Endothelial cell of umbilical vein (primary cell): ENCODE measurements at regions of chr4 and their contacts with region 1.

Region 1: GRCh38 chr4:54233277-54233696 is 4.2 kb downstream of the PDGFRA start:
- DNase-seq: peak; percentile 77
- H3K4me3 ChIP-seq: peak overlapping the region in 2 of 3 experiments; percentile 43 to 62
- H3K27ac ChIP-seq: no peak overlapping the region
- H3K4me1 ChIP-seq: peaks cover 24% of the 10 kb centered on the region
- H3K27me3 ChIP-seq: peaks cover 49 to 53% of the 10 kb centered on the region in 2 experiments
- CTCF ChIP-seq: peak; percentile 81 to 95
- POLR2A ChIP-seq: no peak

Region 2: DNA sequence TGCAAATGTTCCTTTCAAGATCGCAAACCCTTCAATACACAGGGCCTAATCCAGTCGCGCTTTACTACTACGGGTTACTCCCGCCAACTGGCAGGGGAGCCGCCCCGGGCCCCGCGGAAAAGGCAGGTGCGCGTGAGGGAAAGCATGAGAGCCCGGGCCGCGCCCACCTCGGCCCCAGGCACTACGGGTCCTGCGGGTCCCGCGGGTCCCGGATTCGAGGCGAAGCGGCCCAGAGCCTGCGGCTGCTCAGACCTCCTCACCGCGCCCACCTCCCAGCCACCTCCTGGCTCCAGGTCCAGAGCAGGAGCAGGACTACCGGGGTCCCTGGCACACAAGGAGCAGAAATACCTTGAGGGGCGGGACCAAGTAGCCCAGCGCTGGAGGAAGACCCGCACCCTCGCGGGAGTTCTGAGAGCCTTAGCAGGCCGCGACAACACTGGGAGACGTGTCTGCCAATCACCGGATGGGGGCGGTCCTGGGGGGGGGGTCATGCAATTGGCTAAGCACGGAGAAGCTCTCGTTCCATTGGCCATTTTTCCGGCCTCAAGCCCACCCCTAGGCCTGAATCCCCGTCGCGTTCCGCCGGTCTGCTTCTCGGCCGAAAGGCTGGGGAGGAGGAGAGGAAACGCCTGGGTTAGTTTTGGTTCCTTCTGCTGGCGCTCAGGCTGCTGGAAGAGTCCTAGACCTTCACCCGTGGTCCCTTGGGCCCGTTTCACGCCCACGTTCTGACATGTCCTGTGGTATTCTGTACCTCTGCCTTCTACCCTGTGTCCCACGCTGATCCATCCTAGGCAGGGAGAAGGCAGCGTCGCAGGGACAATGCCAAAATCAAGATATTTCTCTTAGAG is 1511.1 kb before region 1 on chr4:
- CTCF ChIA-PET with region 1: interaction called, 10 read pairs
- POLR2A ChIA-PET with region 1: no interaction called
- dilution Hi-C with region 1: no loop called
- intact Hi-C with region 1: no loop called
- DNase-seq: peak; percentile 98
- H3K4me3 ChIP-seq: peak overlapping the region; percentile 34 to 69 (median 65)
- H3K27ac ChIP-seq: peak overlapping the region; percentile 44
- H3K4me1 ChIP-seq: peaks cover 4% of the 10 kb centered on the region
- H3K27me3 ChIP-seq: no peaks in the 10 kb centered on the region
- CTCF ChIP-seq: no peak
- POLR2A ChIP-seq: peak; percentile 98

Region 3: DNA sequence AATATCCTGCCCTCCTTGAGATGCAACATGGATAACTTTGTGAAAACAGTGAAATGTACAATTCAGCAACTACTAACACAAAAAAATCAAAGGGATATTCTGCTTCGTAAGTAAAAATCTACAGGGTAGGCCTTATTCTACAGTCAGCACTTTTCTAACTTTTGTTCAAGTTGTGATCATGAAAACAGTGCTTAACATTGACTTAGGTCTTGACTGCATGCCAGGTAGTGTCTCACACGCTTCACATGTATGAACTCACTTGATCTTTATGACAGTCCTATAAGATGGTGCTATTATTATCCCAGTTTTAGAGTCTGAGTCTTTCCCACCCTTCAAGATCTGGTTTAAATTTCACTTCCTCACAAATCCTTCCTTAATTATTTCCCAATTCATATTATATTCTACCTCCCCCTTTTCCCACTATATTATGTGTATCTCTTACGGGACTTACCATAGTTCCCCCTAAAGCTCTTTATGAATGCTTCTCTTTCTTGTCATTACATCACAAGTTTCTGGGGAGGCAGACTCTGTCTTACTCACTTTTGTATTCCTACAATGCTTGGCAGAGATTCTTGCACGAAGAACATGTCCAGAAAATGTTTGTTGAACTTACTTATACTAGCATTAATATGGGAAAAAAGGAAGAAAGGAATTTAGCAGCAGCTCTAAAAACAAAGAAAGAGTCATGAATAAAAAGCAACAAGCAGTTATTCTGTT is 1047.3 kb before region 1 on chr4:
- CTCF ChIA-PET with region 1: interaction called, 22 read pairs
- POLR2A ChIA-PET with region 1: no interaction called
- dilution Hi-C with region 1: no loop called
- intact Hi-C with region 1: no loop called
- DNase-seq: no peak
- H3K4me3 ChIP-seq: no peak overlapping the region
- H3K27ac ChIP-seq: no peak overlapping the region
- H3K4me1 ChIP-seq: no peaks in the 10 kb centered on the region
- H3K27me3 ChIP-seq: no peaks in the 10 kb centered on the region
- CTCF ChIP-seq: no peak
- POLR2A ChIP-seq: no peak

Region 4: DNA sequence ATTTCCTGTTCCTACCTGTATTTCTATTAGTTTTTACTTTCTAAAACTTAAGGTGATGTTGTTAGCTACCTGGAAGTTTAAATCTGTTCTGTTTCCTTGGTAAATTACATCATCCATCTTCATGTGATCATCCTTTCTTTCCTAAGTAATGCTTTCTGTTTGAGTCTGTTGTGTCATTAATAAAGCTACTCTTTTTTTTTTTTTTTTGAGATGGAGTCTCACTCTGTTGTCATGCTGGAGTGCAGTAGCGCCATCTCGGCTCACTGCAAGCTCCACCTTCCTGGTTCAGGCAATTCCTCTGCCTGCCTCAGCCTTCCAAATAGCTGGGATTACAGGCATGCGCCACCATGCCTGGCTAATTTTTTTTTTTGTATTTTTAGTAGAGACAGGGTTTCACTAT is 782.5 kb before region 1 on chr4:
- CTCF ChIA-PET with region 1: interaction called, 10 read pairs
- POLR2A ChIA-PET with region 1: no interaction called
- dilution Hi-C with region 1: no loop called
- intact Hi-C with region 1: no loop called
- DNase-seq: no peak
- H3K4me3 ChIP-seq: no peak overlapping the region
- H3K27ac ChIP-seq: no peak overlapping the region
- H3K4me1 ChIP-seq: no peaks in the 10 kb centered on the region
- H3K27me3 ChIP-seq: no peaks in the 10 kb centered on the region
- CTCF ChIP-seq: no peak
- POLR2A ChIP-seq: no peak

Region 5: GRCh38 chr4:53695540-53696463 is 537.5 kb before region 1 on chr4:
- CTCF ChIA-PET with region 1: interaction called, 14 read pairs
- POLR2A ChIA-PET with region 1: no interaction called
- dilution Hi-C with region 1: no loop called
- intact Hi-C with region 1: no loop called
- DNase-seq: no peak
- H3K4me3 ChIP-seq: no peak overlapping the region
- H3K27ac ChIP-seq: no peak overlapping the region
- H3K4me1 ChIP-seq: no peaks in the 10 kb centered on the region
- H3K27me3 ChIP-seq: peaks cover 0 to 6% of the 10 kb centered on the region in 2 experiments
- CTCF ChIP-seq: no peak
- POLR2A ChIP-seq: no peak

Region 6: DNA sequence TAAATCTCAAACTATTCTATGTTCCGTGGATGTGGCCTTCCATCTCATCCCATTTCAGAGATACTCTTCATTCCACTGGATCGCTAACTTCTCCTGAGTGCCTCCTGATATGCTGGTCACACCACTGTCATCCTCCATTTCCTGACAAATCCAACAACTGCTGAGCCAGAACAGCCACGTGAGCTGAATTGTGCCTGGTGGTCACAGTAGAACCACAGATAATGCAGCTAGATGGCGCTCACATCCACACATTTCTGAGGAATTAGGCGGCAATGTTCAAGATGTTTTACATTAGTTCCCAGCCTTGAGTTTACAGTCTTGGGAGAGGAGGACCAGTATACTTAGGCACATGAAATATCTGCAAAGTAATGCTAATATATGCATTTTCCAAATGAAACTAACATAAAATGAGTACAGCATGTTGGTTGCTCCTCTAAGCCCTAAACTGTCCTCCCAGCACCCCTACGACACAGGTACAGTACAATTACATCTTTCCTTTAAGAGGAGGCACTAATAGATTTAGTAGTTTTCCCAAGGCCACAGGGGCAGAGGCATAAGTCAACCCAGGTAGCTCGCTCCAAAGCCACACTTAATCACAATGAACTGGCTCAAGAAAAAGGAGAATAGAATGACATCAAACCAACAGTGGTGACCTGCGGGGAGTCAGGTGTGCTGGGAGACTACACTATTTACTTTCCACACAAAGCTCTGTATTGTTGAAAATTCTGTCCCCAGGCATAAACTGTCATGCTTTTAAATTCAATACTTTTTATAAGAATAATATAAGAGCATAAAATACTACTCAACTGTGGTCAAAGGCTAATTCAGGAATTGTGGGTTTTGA is 303.1 kb before region 1 on chr4:
- CTCF ChIA-PET with region 1: interaction called, 84 read pairs
- POLR2A ChIA-PET with region 1: no interaction called
- dilution Hi-C with region 1: no loop called
- intact Hi-C with region 1: no loop called
- DNase-seq: peak; percentile 88
- H3K4me3 ChIP-seq: no peak overlapping the region
- H3K27ac ChIP-seq: no peak overlapping the region
- H3K4me1 ChIP-seq: peaks cover 4% of the 10 kb centered on the region
- H3K27me3 ChIP-seq: peaks cover 0 to 3% of the 10 kb centered on the region in 2 experiments
- CTCF ChIP-seq: peak; percentile 71 to 79
- POLR2A ChIP-seq: no peak

Region 7: GRCh38 chr4:55184600-55185523 is 951.6 kb after region 1 on chr4:
- CTCF ChIA-PET with region 1: no interaction called
- POLR2A ChIA-PET with region 1: no interaction called
- dilution Hi-C with region 1: no loop called
- intact Hi-C with region 1: no loop called
- DNase-seq: no peak
- H3K4me3 ChIP-seq: no peak overlapping the region
- H3K27ac ChIP-seq: peak overlapping the region; percentile 63
- H3K4me1 ChIP-seq: peaks cover 64% of the 10 kb centered on the region
- H3K27me3 ChIP-seq: no peaks in the 10 kb centered on the region
- CTCF ChIP-seq: peak in 1 of 2 donors; percentile 30
- POLR2A ChIP-seq: no peak